ENCODE measurements at regions of chr3 and their contacts with region 1.

Region 1: GRCh38 chr3:127915115-127915936 is at the start of gene KBTBD12:
- DNase-seq: peak; percentile 70 to 84 (median 77)
- ATAC-seq: peak; percentile 82 to 95 (median 95)
- H3K4me3 ChIP-seq: peak within 1 kb of the TSS; percentile 34 to 69 (median 54)
- H3K27ac ChIP-seq: peak within 1 kb of the TSS; percentile 57 to 91 (median 82)
- H3K4me1 ChIP-seq: peaks cover 0 to 39% (median 19%) of the 10 kb centered on the region in 12 donors
- H3K27me3 ChIP-seq: peaks cover 0 to 19% (median 0%) of the 10 kb centered on the region in 9 donors
- CTCF ChIP-seq: peak in 2 of 12 donors; percentile 24 to 28
- POLR2A ChIP-seq: peak; percentile 12 to 46
- total RNA-seq, gene KBTBD12: 24.3 to 47.1 (median 31.9) TPM

Region 2: GRCh38 chr3:127431066-127431465 is 484.3 kb before region 1 on chr3:
- intact Hi-C with region 1: no loop called
- DNase-seq: peak in 1 of 5 donors; percentile 12
- ATAC-seq: no peak
- H3K4me3 ChIP-seq: no peak overlapping the region
- H3K27ac ChIP-seq: no peak overlapping the region
- H3K4me1 ChIP-seq: no peaks in the 10 kb centered on the region
- H3K27me3 ChIP-seq: peaks cover 0 to 53% (median 24%) of the 10 kb centered on the region in 9 donors
- CTCF ChIP-seq: no peak
- POLR2A ChIP-seq: no peak

Region 3: GRCh38 chr3:127775398-127776109 is 139.8 kb before region 1 on chr3:
- intact Hi-C with region 1: loop called in 1 of 10 experiments (anchors 10 kb)
- DNase-seq: peak in 4 of 5 donors; percentile 61 to 80 (median 69)
- ATAC-seq: peak in 3 of 4 donors; percentile 29 to 63 (median 62)
- H3K4me3 ChIP-seq: peak overlapping the region in 1 of 12 donors; percentile 3
- H3K27ac ChIP-seq: peak overlapping the region; percentile 24 to 79 (median 64)
- H3K4me1 ChIP-seq: peaks cover 9 to 87% (median 47%) of the 10 kb centered on the region in 12 donors
- H3K27me3 ChIP-seq: no peaks in the 10 kb centered on the region
- CTCF ChIP-seq: no peak
- POLR2A ChIP-seq: no peak

Region 4: GRCh38 chr3:127953091-127954035 is 38.0 kb after region 1 on chr3:
- intact Hi-C with region 1: loop called in 4 of 10 experiments (anchors 5 kb)
- DNase-seq: no peak
- ATAC-seq: peak; percentile 58 to 85 (median 65)
- H3K4me3 ChIP-seq: no peak overlapping the region
- H3K27ac ChIP-seq: peak overlapping the region; percentile 63 to 95 (median 86)
- H3K4me1 ChIP-seq: peaks cover 0 to 46% (median 24%) of the 10 kb centered on the region in 12 donors
- H3K27me3 ChIP-seq: no peaks in the 10 kb centered on the region
- CTCF ChIP-seq: no peak
- POLR2A ChIP-seq: no peak